Activated CD4-positive, alpha-beta T cell treated with anti-CD3 and anti-CD28 coated beads for 36 hours (primary cell): ENCODE measurements at regions of chr9 and their contacts with region 1.

Region 1: DNA sequence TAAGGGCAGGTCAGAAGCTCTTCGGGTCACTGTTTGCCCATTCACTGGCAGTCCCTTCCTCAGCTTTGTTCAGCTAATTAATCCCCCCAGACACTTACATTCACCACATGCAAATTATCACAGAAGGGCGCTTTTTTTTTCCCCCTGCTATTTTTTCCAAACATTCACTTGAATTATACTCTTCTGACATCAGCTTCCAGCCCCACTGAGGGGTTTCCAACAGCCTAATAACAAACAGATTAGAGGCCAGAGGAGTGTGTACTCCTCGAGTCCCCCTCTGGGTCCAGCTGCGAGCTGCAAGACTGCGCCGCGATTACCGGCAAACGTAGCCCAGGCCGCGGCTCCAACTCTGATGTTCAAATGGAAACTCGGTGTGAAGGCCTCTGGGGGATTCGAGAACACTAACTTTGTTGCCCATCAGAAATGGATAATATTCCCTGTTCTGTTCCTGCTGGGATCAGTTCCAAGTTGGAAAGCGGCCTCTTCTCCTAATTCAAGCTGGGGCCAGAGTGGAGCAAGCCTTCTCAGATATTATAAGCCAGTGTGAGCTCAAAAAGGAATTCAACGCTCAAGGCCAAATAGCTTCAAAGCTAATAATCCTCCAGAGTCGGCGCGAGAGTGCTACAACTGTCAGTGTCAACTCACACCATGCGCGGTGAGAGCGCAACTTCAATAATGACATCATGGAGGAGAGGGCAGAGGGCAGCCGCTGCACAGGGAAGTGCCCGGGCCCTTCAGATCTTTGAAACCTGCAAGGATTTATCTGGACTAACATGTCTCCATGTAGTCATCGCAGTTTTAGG is 560.8 kb downstream of the BNC2 start:
- DNase-seq: no peak
- ATAC-seq: no peak
- H3K4me3 Mint-ChIP-seq: no peak overlapping the region
- H3K27ac Mint-ChIP-seq: no peak overlapping the region
- H3K4me1 Mint-ChIP-seq: no peaks in the 10 kb centered on the region
- H3K27me3 Mint-ChIP-seq: no peaks in the 10 kb centered on the region

Region 2: GRCh38 chr9:16901589-16901988 is 591.9 kb after region 1 on chr9:
- CTCF ChIA-PET with region 1: no interaction called
- POLR2A ChIA-PET with region 1: no interaction called
- intact Hi-C with region 1: loop called in 1 of 2 experiments (anchors 10 kb)
- DNase-seq: no peak
- ATAC-seq: no peak
- H3K4me3 Mint-ChIP-seq: no peak overlapping the region
- H3K27ac Mint-ChIP-seq: no peak overlapping the region
- H3K4me1 Mint-ChIP-seq: no peaks in the 10 kb centered on the region
- H3K27me3 Mint-ChIP-seq: no peaks in the 10 kb centered on the region